H1 (cell line): ENCODE measurements at regions of chr7 and their contacts with region 1.

Region 1: GRCh38 chr7:100456558-100456957 is 7.5 kb downstream of the SPACDR start:
- DNase-seq: no peak
- H3K4me3 ChIP-seq: no peak overlapping the region
- H3K27ac ChIP-seq: no peak overlapping the region
- H3K4me1 ChIP-seq: peaks cover 0 to 8% (median 6%) of the 10 kb centered on the region in 4 experiments; a peak in 6 of 7 replicates
- H3K27me3 ChIP-seq: no peaks in the 10 kb centered on the region
- CTCF ChIP-seq: peak; percentile 32 to 41 (median 34); a peak in 3 of 4 replicates
- EP300 ChIP-seq: no peak
- POLR2A ChIP-seq: no peak
- RAD21 ChIP-seq: peak; percentile 31 to 43; a peak in 2 of 4 replicates

Region 2: GRCh38 chr7:100396421-100396982 is 60.1 kb before region 1 on chr7:
- CTCF ChIA-PET with region 1: interaction called, 16 read pairs
- POLR2A ChIA-PET with region 1: no interaction called
- DNase-seq: no peak
- H3K4me3 ChIP-seq: no peak overlapping the region
- H3K27ac ChIP-seq: no peak overlapping the region
- H3K4me1 ChIP-seq: peaks cover 0 to 10% (median 5%) of the 10 kb centered on the region in 4 experiments; a peak in 6 of 7 replicates
- H3K27me3 ChIP-seq: peaks cover 0 to 2% (median 0%) of the 10 kb centered on the region in 4 experiments; a peak in 1 of 7 replicates
- CTCF ChIP-seq: no peak
- EP300 ChIP-seq: no peak
- POLR2A ChIP-seq: no peak
- RAD21 ChIP-seq: no peak

Region 3: GRCh38 chr7:100444311-100445278 is 12.0 kb before region 1 on chr7:
- CTCF ChIA-PET with region 1: interaction called, 70 read pairs
- POLR2A ChIA-PET with region 1: interaction called, 3 read pairs
- DNase-seq: no peak
- H3K4me3 ChIP-seq: no peak overlapping the region
- H3K27ac ChIP-seq: no peak overlapping the region
- H3K4me1 ChIP-seq: peaks cover 0 to 5% (median 2%) of the 10 kb centered on the region in 4 experiments; a peak in 3 of 7 replicates
- H3K27me3 ChIP-seq: no peaks in the 10 kb centered on the region
- CTCF ChIP-seq: no peak
- EP300 ChIP-seq: no peak
- POLR2A ChIP-seq: no peak
- RAD21 ChIP-seq: no peak